B cell (primary cell): ENCODE measurements at regions of chr5 and their contacts with region 1.

Region 1: GRCh38 chr5:151115274-151115905 is 34.6 kb upstream of the TNIP1 start:
- DNase-seq: peak; percentile 78
- ATAC-seq: peak; percentile 88
- H3K4me3 ChIP-seq: no peak overlapping the region
- H3K4me3 Mint-ChIP-seq: no peak overlapping the region
- H3K27ac ChIP-seq: peak overlapping the region in 1 of 2 donors; percentile 51
- H3K27ac Mint-ChIP-seq: peak overlapping the region; percentile 56
- H3K4me1 ChIP-seq: peaks cover 4 to 11% of the 10 kb centered on the region in 2 donors
- H3K4me1 Mint-ChIP-seq: peaks cover 23% of the 10 kb centered on the region
- H3K27me3 ChIP-seq: no peaks in the 10 kb centered on the region
- H3K27me3 Mint-ChIP-seq: no peaks in the 10 kb centered on the region
- CTCF ChIP-seq: peak; percentile 98

Region 2: DNA sequence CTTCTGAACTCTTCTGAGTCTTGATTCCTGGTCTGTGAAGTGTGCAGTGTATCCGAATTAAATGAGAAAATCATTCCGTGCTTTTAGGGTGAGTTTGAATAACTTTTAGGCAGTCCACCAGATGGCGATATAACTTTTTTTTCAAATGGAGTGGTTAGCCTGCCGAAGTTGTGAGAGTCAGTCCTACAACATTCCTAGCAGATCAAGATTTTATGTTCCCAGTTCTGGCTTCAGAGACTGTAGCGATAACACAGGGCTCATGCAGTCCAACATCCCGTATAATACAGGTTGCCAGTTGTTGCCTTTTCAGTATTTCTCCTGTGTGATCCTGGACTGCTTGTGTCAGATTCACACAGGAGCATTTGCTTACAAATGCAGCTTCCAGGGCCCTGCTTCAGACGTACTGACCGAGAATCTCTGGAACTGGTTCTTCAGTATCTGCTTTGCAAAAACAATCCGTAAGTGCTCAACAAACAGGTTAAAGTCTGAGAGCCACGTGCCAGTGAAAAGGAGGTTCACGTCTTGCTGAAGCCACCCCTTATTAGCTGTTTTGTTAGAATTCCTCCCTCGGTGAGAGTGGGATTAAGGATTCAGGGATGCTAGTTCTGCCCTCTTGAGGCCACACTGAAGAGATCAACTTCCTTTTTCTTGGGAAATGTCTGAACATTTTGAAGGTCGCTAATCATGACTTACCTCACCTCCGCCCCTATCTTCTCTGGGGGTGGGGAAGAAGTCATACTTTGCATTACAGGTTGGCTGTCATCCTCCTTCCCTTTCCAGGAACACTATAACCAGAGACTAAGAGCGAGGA is 314.1 kb before region 1 on chr5:
- CTCF ChIA-PET with region 1: interaction called, 18 read pairs
- POLR2A ChIA-PET with region 1: no interaction called
- intact Hi-C with region 1: loop called (anchors 2 kb)
- DNase-seq: peak; percentile 69
- ATAC-seq: no peak
- H3K4me3 ChIP-seq: no peak overlapping the region
- H3K4me3 Mint-ChIP-seq: no peak overlapping the region
- H3K27ac ChIP-seq: no peak overlapping the region
- H3K27ac Mint-ChIP-seq: no peak overlapping the region
- H3K4me1 ChIP-seq: peaks cover 3 to 4% of the 10 kb centered on the region in 2 donors
- H3K4me1 Mint-ChIP-seq: no peaks in the 10 kb centered on the region
- H3K27me3 ChIP-seq: peaks cover 0 to 7% (median 5%) of the 10 kb centered on the region in 4 experiments
- H3K27me3 Mint-ChIP-seq: peaks cover 30% of the 10 kb centered on the region
- CTCF ChIP-seq: peak; percentile 83

Region 3: DNA sequence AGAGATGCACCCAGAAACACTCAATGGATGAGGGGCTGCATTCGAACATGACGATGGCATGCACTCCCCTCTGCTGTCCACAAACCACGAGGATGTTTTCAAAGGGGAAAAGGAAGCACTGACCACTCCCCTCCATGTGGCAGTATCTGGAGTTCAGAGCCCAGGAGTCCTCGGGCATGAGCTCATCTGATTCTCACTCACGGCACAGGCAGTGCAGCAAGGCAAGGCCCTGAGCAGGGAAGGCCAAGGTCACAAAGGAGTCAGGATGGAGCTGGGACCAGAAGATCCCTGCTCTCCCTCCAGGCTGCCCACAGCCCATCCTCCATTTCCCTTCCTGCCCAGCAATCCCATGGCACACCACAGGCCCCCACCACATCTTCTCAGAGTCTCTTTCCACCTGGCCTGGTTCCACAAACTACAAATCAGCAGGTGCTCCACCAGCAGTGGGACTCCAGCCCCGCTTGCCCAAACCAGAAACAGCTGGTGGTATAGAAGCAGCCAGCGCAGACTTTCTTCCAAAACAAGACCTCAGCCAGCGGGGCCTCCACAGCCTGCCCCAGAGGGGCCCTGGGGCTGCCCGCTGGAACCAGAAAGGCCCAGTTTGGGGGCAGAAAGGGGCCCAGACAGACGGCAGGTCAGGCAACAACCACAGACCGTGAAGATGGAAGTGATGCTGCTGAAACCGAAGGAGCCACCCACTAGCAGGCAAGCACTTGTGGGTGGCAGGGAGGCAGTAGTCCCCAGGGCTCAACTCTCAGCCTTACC is 46.8 kb before region 1 on chr5:
- CTCF ChIA-PET with region 1: interaction called, 28 read pairs
- POLR2A ChIA-PET with region 1: interaction called, 4 read pairs
- intact Hi-C with region 1: no loop called
- DNase-seq: peak; percentile 43
- ATAC-seq: peak; percentile 78
- H3K4me3 ChIP-seq: peak overlapping the region in 1 of 5 experiments; percentile 5
- H3K4me3 Mint-ChIP-seq: peak overlapping the region; percentile 52
- H3K27ac ChIP-seq: peak overlapping the region in 1 of 2 donors; percentile 62
- H3K27ac Mint-ChIP-seq: peak overlapping the region; percentile 88
- H3K4me1 ChIP-seq: peaks cover 36 to 55% of the 10 kb centered on the region in 2 donors
- H3K4me1 Mint-ChIP-seq: peaks cover 73% of the 10 kb centered on the region
- H3K27me3 ChIP-seq: no peaks in the 10 kb centered on the region
- H3K27me3 Mint-ChIP-seq: no peaks in the 10 kb centered on the region
- CTCF ChIP-seq: no peak

Region 4: DNA sequence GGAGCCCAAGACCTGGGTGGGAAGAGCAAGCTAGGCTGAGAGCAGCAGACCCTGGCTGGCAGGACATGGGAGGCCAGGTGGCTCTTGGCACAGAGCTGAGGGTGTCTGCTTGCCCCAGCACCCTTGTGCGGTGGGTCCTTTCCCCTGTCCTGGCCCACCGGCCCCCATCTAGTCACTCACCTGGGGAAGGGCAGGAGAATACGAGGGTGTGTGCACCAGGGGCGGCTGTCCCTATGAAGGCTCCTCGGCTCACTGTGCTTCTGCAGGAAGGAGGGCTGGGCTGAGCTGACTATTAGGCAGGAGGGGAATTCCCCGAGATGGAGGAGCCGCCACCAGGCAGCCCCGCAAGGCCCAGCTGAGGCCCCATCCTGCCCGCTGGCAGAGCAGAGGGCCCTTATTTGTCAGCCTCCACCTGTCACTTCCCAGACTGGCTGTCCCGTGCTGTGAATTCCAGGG is 28.5 kb before region 1 on chr5:
- CTCF ChIA-PET with region 1: interaction called, 85 read pairs
- POLR2A ChIA-PET with region 1: no interaction called
- intact Hi-C with region 1: no loop called
- DNase-seq: peak; percentile 80
- ATAC-seq: peak; percentile 92
- H3K4me3 ChIP-seq: peak overlapping the region in 4 of 5 experiments; percentile 7 to 47 (median 34)
- H3K4me3 Mint-ChIP-seq: peak overlapping the region; percentile 69
- H3K27ac ChIP-seq: peak overlapping the region; percentile 14 to 69
- H3K27ac Mint-ChIP-seq: peak overlapping the region; percentile 38
- H3K4me1 ChIP-seq: peaks cover 53 to 54% of the 10 kb centered on the region in 2 donors
- H3K4me1 Mint-ChIP-seq: peaks cover 58% of the 10 kb centered on the region
- H3K27me3 ChIP-seq: no peaks in the 10 kb centered on the region
- H3K27me3 Mint-ChIP-seq: no peaks in the 10 kb centered on the region
- CTCF ChIP-seq: no peak

Region 5: GRCh38 chr5:151126199-151126645 is 10.8 kb after region 1 on chr5:
- CTCF ChIA-PET with region 1: interaction called, 1,701 read pairs
- POLR2A ChIA-PET with region 1: interaction called, 5 read pairs
- intact Hi-C with region 1: no loop called
- DNase-seq: peak; percentile 80
- ATAC-seq: no peak
- H3K4me3 ChIP-seq: peak overlapping the region in 1 of 5 experiments; percentile 12
- H3K4me3 Mint-ChIP-seq: peak overlapping the region; percentile 88
- H3K27ac ChIP-seq: peak overlapping the region; percentile 87 to 91
- H3K27ac Mint-ChIP-seq: peak overlapping the region; percentile 91
- H3K4me1 ChIP-seq: peaks cover 50 to 74% of the 10 kb centered on the region in 2 donors
- H3K4me1 Mint-ChIP-seq: peaks cover 78% of the 10 kb centered on the region
- H3K27me3 ChIP-seq: no peaks in the 10 kb centered on the region
- H3K27me3 Mint-ChIP-seq: no peaks in the 10 kb centered on the region
- CTCF ChIP-seq: peak; percentile 78

Region 6: DNA sequence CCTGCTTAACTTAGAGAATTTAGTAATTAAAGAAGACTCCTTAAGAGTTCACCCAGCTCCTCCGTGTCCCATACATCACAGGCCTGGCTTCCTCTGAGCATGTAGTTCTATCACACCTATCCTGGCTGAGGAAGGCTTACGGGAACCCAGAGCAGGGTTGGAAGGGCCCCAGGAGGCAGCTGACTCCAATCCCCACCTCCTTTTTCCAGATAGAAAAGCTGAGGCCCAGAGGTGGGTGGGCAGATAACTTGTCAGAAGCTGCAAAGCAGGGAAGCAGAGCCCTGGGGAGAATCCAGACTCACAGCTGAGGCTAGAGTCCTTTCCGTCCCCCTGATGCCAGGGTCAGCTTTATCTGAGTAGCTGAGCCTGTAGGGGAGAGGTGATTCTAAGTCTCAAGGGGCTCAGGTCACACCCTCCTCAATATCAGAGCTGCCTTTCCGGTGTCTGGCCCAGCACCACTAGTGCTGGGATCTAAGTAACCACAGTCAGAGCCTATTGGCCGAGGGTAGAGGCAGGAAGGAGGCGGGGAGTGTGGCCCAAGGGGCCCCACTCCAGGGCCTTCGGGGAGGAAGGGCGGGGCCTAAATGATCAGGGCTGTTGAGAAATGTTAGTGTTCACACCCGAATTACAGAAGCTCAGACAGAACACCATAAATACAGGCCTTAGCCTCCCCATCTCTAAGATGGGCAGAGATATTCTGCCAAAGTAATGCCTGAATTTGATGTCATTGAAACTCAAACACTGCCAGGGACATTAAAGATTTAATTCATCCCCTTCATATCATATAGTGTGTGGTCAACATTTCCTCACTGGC is 98.6 kb after region 1 on chr5:
- CTCF ChIA-PET with region 1: interaction called, 15 read pairs
- POLR2A ChIA-PET with region 1: no interaction called
- intact Hi-C with region 1: no loop called
- DNase-seq: peak; percentile 92
- ATAC-seq: peak; percentile 74
- H3K4me3 ChIP-seq: peak overlapping the region; percentile 35 to 58 (median 38)
- H3K4me3 Mint-ChIP-seq: peak overlapping the region; percentile 79
- H3K27ac ChIP-seq: peak overlapping the region; percentile 96 to 99
- H3K27ac Mint-ChIP-seq: peak overlapping the region; percentile 99
- H3K4me1 ChIP-seq: peaks cover 98 to 100% of the 10 kb centered on the region in 2 donors
- H3K4me1 Mint-ChIP-seq: peaks cover 90% of the 10 kb centered on the region
- H3K27me3 ChIP-seq: no peaks in the 10 kb centered on the region
- H3K27me3 Mint-ChIP-seq: no peaks in the 10 kb centered on the region
- CTCF ChIP-seq: no peak

Region 7: GRCh38 chr5:151315998-151316597 is 200.7 kb after region 1 on chr5:
- CTCF ChIA-PET with region 1: interaction called, 14 read pairs
- POLR2A ChIA-PET with region 1: no interaction called
- intact Hi-C with region 1: no loop called
- DNase-seq: peak; percentile 65
- ATAC-seq: peak; percentile 76
- H3K4me3 ChIP-seq: no peak overlapping the region
- H3K4me3 Mint-ChIP-seq: no peak overlapping the region
- H3K27ac ChIP-seq: no peak overlapping the region
- H3K27ac Mint-ChIP-seq: no peak overlapping the region
- H3K4me1 ChIP-seq: peaks cover 9 to 16% of the 10 kb centered on the region in 2 donors
- H3K4me1 Mint-ChIP-seq: peaks cover 10% of the 10 kb centered on the region
- H3K27me3 ChIP-seq: no peaks in the 10 kb centered on the region
- H3K27me3 Mint-ChIP-seq: no peaks in the 10 kb centered on the region
- CTCF ChIP-seq: peak; percentile 95